HCT116 (cell line): ENCODE measurements at regions of chr2 and their contacts with region 1.

Region 1: GRCh38 chr2:128949360-128949759 is 630.7 kb upstream of the HS6ST1 start:
- DNase-seq: no peak
- ATAC-seq: no peak
- H3K4me3 ChIP-seq: no peak overlapping the region
- H3K27ac ChIP-seq: no peak overlapping the region
- H3K4me1 ChIP-seq: no peaks in the 10 kb centered on the region
- H3K27me3 ChIP-seq: peaks cover 17% of the 10 kb centered on the region
- CTCF ChIP-seq: no peak
- POLR2A ChIP-seq: no peak
- RAD21 ChIP-seq: no peak

Region 2: DNA sequence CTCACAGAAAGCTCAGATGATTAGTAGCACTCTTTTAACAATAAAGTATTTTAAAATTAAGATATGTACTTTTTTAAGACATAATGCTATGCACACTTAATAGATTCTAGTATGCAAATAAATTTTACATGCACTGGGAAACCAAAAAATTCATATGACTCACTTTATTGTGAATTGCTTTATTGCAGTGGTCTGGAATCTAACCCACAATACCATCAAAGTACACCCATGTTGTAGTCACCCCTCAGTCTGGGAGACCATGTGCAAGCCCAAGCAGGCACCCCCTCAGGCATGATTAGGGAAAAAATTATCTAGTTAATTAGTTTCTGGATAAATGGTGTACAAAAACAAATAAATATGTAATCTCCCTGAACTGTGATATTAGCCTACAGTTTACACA is 18.3 kb after region 1 on chr2:
- CTCF ChIA-PET with region 1: no interaction called
- POLR2A ChIA-PET with region 1: no interaction called
- RAD21 ChIA-PET with region 1: no interaction called
- intact Hi-C with region 1: loop called (anchors 1 kb)
- DNase-seq: no peak
- ATAC-seq: no peak
- H3K4me3 ChIP-seq: no peak overlapping the region
- H3K27ac ChIP-seq: no peak overlapping the region
- H3K4me1 ChIP-seq: no peaks in the 10 kb centered on the region
- H3K27me3 ChIP-seq: no peaks in the 10 kb centered on the region; the same call in 1 of the 2 replicates
- CTCF ChIP-seq: no peak
- POLR2A ChIP-seq: no peak
- RAD21 ChIP-seq: no peak